ENCODE measurements at regions of chr9 and their contacts with region 1.

Region 1: GRCh38 chr9:127214421-127215267 is 49.9 kb upstream of the GARNL3 start:
- DNase-seq: peak; percentile 82
- H3K4me3 Mint-ChIP-seq: no peak overlapping the region
- H3K27ac Mint-ChIP-seq: no peak overlapping the region
- H3K4me1 Mint-ChIP-seq: peaks cover 4% of the 10 kb centered on the region
- H3K27me3 Mint-ChIP-seq: peaks cover 3% of the 10 kb centered on the region

Region 2: GRCh38 chr9:127283917-127284316 is 69.3 kb after region 1 on chr9:
- CTCF ChIA-PET with region 1: no interaction called
- intact Hi-C with region 1: no loop called
- DNase-seq: peak; percentile 57
- H3K4me3 Mint-ChIP-seq: no peak overlapping the region
- H3K27ac Mint-ChIP-seq: no peak overlapping the region
- H3K4me1 Mint-ChIP-seq: no peaks in the 10 kb centered on the region
- H3K27me3 Mint-ChIP-seq: peaks cover 33% of the 10 kb centered on the region

Region 3: GRCh38 chr9:127347831-127348779 is 133.5 kb after region 1 on chr9:
- CTCF ChIA-PET with region 1: no interaction called
- intact Hi-C with region 1: loop called (anchors 1 kb)
- DNase-seq: no peak
- H3K4me3 Mint-ChIP-seq: no peak overlapping the region
- H3K27ac Mint-ChIP-seq: no peak overlapping the region
- H3K4me1 Mint-ChIP-seq: no peaks in the 10 kb centered on the region
- H3K27me3 Mint-ChIP-seq: peaks cover 24% of the 10 kb centered on the region

Region 4: GRCh38 chr9:127396808-127397497 is 182.3 kb after region 1 on chr9 and contains the start of gene SLC2A8:
- CTCF ChIA-PET with region 1: interaction called, 3 read pairs
- intact Hi-C with region 1: loop called (anchors 2 kb)
- DNase-seq: peak; percentile 92
- H3K4me3 Mint-ChIP-seq: peak within 1 kb of the TSS; percentile 61
- H3K27ac Mint-ChIP-seq: no peak within 1 kb of the TSS
- H3K4me1 Mint-ChIP-seq: peaks cover 9% of the 10 kb centered on the region
- H3K27me3 Mint-ChIP-seq: peaks cover 74% of the 10 kb centered on the region
- total RNA-seq, gene SLC2A8: 3.4 TPM

Region 5: DNA sequence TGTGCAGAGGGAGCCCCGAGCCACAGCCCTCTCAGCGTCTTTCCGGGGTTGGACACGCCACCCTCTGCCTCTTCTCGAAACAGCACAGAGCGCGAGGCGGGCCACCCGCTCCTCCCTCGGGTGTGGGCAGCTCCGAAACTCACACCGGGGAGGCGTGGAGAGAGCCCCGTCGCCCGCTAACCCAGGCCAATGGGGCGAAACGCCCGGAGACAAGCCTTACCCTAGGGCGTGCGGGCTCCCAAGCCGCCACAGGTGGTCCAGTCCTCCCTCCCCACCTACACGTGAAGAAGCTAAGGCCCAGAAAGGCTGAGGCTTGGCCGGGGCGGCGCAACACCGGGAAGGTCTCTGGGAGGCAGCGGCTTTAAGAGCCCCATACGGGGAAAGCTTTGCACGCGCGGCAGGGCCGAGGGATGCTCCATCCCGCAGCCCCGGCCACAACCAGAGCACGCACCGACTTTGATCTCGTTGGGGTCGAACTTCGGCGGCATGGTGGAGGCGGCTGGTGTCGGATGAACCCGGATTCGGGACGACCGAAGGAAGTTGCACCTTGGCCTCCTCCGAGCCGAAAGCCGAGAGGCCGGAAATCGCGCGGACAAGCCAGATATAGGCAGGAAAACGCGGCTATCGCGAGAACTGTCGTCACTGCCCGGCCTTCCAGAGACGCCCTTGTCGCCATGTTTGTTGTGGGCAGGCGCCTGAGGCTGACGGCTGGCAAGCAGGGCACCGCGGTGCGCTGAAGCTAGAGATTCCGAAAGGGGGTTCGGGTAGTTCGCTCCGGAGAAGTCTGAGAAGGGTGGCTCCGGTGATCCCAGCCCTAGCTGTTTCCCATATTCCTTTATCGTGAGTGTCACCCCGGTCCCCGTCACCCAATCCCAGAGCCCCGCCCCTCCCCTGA is 236.4 kb after region 1 on chr9 and contains the starts of genes LRSAM1 and RPL12:
- CTCF ChIA-PET with region 1: interaction called, 5 read pairs
- intact Hi-C with region 1: loop called (anchors 2 kb)
- DNase-seq: peak; percentile 97
- H3K4me3 Mint-ChIP-seq: peak within 1 kb of the TSS; percentile 89
- H3K27ac Mint-ChIP-seq: peak within 1 kb of the TSS; percentile 95
- H3K4me1 Mint-ChIP-seq: peaks cover 42% of the 10 kb centered on the region
- H3K27me3 Mint-ChIP-seq: no peaks in the 10 kb centered on the region
- total RNA-seq, gene LRSAM1: 8.8 to 9.9 TPM
- total RNA-seq, gene RPL12: 3,038 to 3,119 TPM

Region 6: GRCh38 chr9:127854184-127854806 is 639.7 kb after region 1 on chr9 and contains the start of gene ENG:
- CTCF ChIA-PET with region 1: no interaction called
- intact Hi-C with region 1: no loop called
- DNase-seq: peak; percentile 49
- H3K4me3 Mint-ChIP-seq: peak within 1 kb of the TSS; percentile 86
- H3K27ac Mint-ChIP-seq: peak within 1 kb of the TSS; percentile 81
- H3K4me1 Mint-ChIP-seq: peaks cover 32% of the 10 kb centered on the region
- H3K27me3 Mint-ChIP-seq: no peaks in the 10 kb centered on the region
- total RNA-seq, gene ENG: 10.5 to 11.6 TPM

Measured in activated naive CD4-positive, alpha-beta T cell treated with anti-CD3 and anti-CD28 coated beads for 36 hours (primary cell).